ENCODE measurements at regions of chr2 and their contacts with region 1.

Region 1: DNA sequence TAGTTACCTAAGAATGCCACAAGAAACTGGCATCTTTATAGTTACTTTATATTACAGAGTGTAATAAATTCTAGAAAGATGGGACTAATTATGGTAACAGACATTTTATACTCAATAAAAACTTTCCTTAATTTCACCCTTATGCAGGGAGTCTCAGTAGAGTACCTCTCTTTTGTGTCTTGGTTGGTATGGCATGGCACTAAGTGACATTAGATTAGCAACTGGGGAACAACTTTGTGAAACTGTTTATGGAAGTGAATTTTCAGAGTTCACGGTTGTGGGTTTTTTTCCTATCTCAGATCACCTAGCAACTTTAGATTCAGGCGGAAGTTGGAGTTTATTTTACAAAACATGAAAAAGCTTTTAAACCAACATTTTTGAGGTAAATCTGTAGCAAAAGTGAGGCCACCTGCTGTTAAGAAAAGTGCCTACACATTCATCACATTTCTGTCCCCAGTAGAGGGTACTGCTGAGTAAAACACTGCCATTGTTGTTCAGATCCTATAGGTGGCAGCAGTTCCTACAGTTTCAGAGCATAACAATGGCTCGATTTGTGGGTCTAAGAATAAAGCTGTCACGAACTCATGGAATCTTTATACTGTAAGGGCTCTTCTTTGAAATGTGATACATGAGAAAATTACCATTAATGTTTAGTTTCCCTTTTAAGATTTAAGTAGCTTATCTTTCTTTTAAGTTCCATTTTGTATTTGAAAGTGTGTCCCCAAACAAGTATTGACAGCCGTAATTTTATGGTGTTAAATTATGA is 117.6 kb downstream of the CAMKMT start:
- DNase-seq: peak in 1 of 2 donors; percentile 13
- ATAC-seq: peak; percentile 99 to 100
- H3K4me3 ChIP-seq: no peak overlapping the region
- H3K27ac ChIP-seq: no peak overlapping the region
- H3K4me1 ChIP-seq: peaks cover 3 to 6% of the 10 kb centered on the region in 2 donors
- H3K27me3 ChIP-seq: no peaks in the 10 kb centered on the region
- CTCF ChIP-seq: peak; percentile 80 to 98 (median 94)
- POLR2A ChIP-seq: no peak

Region 2: DNA sequence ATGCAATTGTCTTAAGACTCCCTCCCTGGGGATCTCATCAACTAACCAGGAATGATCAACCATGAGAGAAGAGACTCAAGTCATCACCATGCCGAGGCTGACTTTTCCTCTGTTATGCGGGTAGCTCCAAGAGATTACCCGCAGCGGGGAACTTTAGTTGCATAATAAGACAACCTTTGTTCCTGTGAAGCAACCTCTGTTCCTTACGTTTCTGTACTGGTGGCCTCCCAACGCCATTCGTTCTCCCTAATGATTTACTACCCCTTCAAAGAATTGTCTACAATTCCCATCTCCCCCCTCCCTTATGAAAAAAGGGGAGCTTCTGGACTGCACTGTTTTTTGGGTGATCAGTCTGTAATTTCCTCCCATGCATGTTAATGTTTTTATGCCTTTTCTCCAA is 417.4 kb before region 1 on chr2:
- in situ Hi-C with region 1: no loop called
- intact Hi-C with region 1: no loop called
- DNase-seq: no peak
- ATAC-seq: no peak
- H3K4me3 ChIP-seq: no peak overlapping the region
- H3K27ac ChIP-seq: no peak overlapping the region
- H3K4me1 ChIP-seq: no peaks in the 10 kb centered on the region
- H3K27me3 ChIP-seq: no peaks in the 10 kb centered on the region
- CTCF ChIP-seq: no peak
- POLR2A ChIP-seq: no peak

Region 3: DNA sequence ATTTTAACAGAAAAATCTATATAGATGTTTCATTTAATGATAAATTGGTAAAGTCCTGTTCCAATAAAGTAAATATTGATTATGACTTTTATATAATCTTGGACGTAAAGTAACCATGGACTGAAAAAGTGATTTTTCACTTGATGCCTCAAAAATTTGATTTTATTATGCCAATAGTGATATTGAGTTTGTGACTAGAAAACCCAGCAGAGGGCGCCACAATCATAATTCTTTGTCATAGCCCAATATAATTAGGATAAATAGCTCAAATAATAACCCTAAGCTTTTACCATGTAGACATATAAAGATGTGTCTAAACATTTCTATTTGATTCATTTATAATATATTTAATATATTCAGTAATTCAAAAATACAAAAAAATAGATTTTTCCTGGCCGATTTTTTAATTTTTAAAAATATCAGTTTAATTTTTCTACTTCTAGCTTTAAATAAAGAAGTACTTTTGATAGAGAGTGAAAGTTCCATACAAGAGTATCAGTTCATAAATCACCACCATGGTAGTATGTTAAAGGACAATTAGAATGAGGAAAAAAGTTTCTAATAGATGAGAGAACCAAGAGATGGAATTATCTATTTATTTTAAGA is 86.9 kb before region 1 on chr2:
- in situ Hi-C with region 1: no loop called
- intact Hi-C with region 1: loop called (anchors 2 kb)
- DNase-seq: no peak
- ATAC-seq: no peak
- H3K4me3 ChIP-seq: no peak overlapping the region
- H3K27ac ChIP-seq: no peak overlapping the region
- H3K4me1 ChIP-seq: no peaks in the 10 kb centered on the region
- H3K27me3 ChIP-seq: no peaks in the 10 kb centered on the region
- CTCF ChIP-seq: peak in 4 of 5 experiments; percentile 21 to 62 (median 44)
- POLR2A ChIP-seq: no peak

Region 4: GRCh38 chr2:44715671-44716081 is 236.4 kb after region 1 on chr2:
- in situ Hi-C with region 1: loop called in 1 of 4 experiments (anchors 25 kb)
- intact Hi-C with region 1: loop called (anchors 1 kb)
- DNase-seq: no peak
- ATAC-seq: no peak
- H3K4me3 ChIP-seq: no peak overlapping the region
- H3K27ac ChIP-seq: no peak overlapping the region
- H3K4me1 ChIP-seq: no peaks in the 10 kb centered on the region
- H3K27me3 ChIP-seq: no peaks in the 10 kb centered on the region
- CTCF ChIP-seq: peak in 4 of 5 experiments; percentile 21 to 52 (median 32)
- POLR2A ChIP-seq: no peak

Region 5: GRCh38 chr2:44955593-44956392 is 476.5 kb after region 1 on chr2:
- in situ Hi-C with region 1: loop called (anchors 5 to 10 kb)
- intact Hi-C with region 1: loop called (anchors 1 kb)
- DNase-seq: peak; percentile 43 to 52
- ATAC-seq: peak; percentile 58 to 68
- H3K4me3 ChIP-seq: peak overlapping the region; percentile 43 to 48 (median 45)
- H3K27ac ChIP-seq: no peak overlapping the region
- H3K4me1 ChIP-seq: peaks cover 10 to 11% of the 10 kb centered on the region in 2 donors
- H3K27me3 ChIP-seq: peaks cover 29 to 39% (median 38%) of the 10 kb centered on the region in 3 donors
- CTCF ChIP-seq: peak; percentile 70 to 96 (median 89)
- POLR2A ChIP-seq: no peak

Region 6: GRCh38 chr2:44964752-44965236 is 485.5 kb after region 1 on chr2:
- in situ Hi-C with region 1: loop called (anchors 5 to 10 kb)
- intact Hi-C with region 1: no loop called
- DNase-seq: no peak
- ATAC-seq: no peak
- H3K4me3 ChIP-seq: no peak overlapping the region
- H3K27ac ChIP-seq: no peak overlapping the region
- H3K4me1 ChIP-seq: no peaks in the 10 kb centered on the region
- H3K27me3 ChIP-seq: peaks cover 0 to 6% (median 0%) of the 10 kb centered on the region in 3 donors
- CTCF ChIP-seq: no peak
- POLR2A ChIP-seq: no peak

Measured in gastrocnemius medialis (tissue), 4 donors.